ENCODE measurements at regions of chr16 and their contacts with region 1.

Region 1: GRCh38 chr16:23384878-23385277 is 68.1 kb downstream of the COG7 start:
- DNase-seq: peak; percentile 96
- H3K4me3 ChIP-seq: no peak overlapping the region
- H3K27ac ChIP-seq: no peak overlapping the region
- H3K4me1 ChIP-seq: peaks cover 5% of the 10 kb centered on the region
- H3K27me3 ChIP-seq: no peaks in the 10 kb centered on the region
- CTCF ChIP-seq: no peak

Region 2: DNA sequence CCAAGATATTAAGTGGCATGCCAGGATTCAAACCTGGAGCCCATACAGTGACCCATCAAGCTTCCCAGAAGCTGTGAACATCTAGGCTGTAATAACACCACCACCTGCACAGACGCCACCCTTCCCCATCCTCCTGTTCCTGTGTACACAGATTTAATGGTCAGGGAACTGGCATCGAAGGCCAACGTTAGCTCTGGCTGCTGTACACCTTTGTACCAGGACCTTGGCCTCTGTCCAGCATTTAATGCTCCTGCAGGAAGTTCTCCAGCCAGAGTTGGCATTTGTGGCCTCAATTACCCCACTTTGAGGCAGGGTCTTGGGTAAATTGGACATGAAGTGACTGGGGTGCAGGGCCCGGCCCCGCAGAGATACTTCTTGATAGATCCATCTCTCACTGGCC is 33.5 kb before region 1 on chr16:
- CTCF ChIA-PET with region 1: no interaction called
- dilution Hi-C with region 1: loop called (anchors 5 kb)
- in situ Hi-C with region 1: no loop called
- intact Hi-C with region 1: no loop called
- DNase-seq: no peak
- H3K4me3 ChIP-seq: no peak overlapping the region
- H3K27ac ChIP-seq: no peak overlapping the region
- H3K4me1 ChIP-seq: no peaks in the 10 kb centered on the region
- H3K27me3 ChIP-seq: no peaks in the 10 kb centered on the region
- CTCF ChIP-seq: no peak

Region 3: DNA sequence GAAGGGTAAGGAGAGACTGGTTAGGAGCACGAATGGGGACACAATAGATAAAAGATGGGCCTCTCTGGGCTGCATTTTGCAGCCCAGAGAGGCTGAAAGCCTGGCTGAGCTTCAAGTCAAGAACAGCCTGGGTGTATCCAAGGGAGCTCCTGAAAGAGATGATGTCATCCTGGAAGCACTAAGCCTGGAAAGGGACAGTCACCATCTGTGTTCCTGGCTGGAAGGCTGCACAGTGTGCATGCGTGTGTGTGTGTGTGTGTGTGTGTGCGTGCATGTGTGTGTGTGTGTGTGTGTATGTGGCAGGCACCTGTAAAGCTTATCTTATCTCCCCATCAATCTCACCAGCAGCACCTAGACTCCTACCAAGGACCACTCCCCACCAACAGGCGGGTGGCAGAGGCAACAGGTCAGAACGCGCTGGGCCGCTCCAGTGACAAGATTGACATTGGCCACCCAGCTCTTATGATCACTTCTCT is 24.0 kb after region 1 on chr16:
- CTCF ChIA-PET with region 1: no interaction called
- dilution Hi-C with region 1: no loop called
- in situ Hi-C with region 1: no loop called
- intact Hi-C with region 1: no loop called
- DNase-seq: no peak
- H3K4me3 ChIP-seq: no peak overlapping the region
- H3K27ac ChIP-seq: no peak overlapping the region
- H3K4me1 ChIP-seq: no peaks in the 10 kb centered on the region
- H3K27me3 ChIP-seq: no peaks in the 10 kb centered on the region
- CTCF ChIP-seq: no peak

Measured in mammary epithelial cell (primary cell).